ENCODE measurements at regions of chr18 and their contacts with region 1.

Region 1: GRCh38 chr18:8800449-8800848 is 95.1 kb downstream of the MTCL1 start:
- DNase-seq: peak; percentile 100
- ATAC-seq: peak; percentile 75
- H3K4me3 ChIP-seq: peak overlapping the region; percentile 1; the same call in 1 of the 2 replicates
- H3K27ac ChIP-seq: peak overlapping the region; percentile 95
- H3K4me1 ChIP-seq: peaks cover 43% of the 10 kb centered on the region
- H3K27me3 ChIP-seq: no peaks in the 10 kb centered on the region
- CTCF ChIP-seq: no peak
- POLR2A ChIP-seq: peak; percentile 68
- RAD21 ChIP-seq: peak; percentile 21; the same call in 1 of the 2 replicates

Region 2: DNA sequence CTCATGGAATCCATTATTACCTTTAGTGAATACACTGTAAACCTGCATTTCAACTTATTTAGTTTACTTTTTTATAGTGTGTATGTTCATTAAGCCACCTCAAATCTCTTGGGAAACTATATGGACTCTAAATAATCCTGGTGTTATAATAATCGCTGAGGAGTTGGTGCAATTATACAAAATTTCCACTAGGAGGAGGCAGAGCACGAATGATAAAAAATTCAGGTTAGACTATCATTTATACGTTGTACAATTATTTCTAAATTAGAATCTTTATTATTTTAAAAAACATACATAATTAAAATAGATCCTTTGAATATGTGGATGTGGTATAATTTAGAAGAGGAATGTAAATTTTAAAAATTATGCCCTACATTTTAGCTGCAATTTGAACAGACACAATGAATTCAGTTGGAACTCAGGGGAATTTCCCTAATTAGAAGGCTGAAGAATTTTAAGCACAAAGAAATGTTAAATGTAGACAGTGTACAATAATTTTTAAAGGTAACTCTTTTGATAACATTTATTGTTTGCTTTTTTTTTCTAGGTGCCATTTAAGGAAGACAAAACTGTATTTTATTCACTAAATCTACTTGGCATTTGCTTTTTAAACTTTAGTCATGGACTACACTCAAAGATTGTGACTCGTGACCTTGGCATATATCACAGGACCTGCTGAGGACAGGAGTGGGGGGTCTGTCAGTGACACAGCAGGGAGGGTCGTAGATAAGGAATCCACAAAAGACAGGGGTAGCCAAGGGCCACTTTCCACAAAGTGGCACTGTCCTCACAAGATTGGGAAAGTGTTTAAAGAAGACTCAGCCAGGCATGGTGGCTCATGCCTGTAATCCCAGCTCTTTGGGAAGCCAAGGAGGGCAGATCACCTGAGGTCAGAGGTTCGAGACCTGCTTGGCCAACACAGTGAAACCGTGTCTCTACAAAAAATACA is 145.7 kb before region 1 on chr18:
- CTCF ChIA-PET with region 1: no interaction called
- POLR2A ChIA-PET with region 1: no interaction called
- dilution Hi-C with region 1: no loop called
- in situ Hi-C with region 1: no loop called
- intact Hi-C with region 1: loop called (anchors 10 kb)
- DNase-seq: peak; percentile 34
- ATAC-seq: peak; percentile 82
- H3K4me3 ChIP-seq: no peak overlapping the region
- H3K27ac ChIP-seq: no peak overlapping the region
- H3K4me1 ChIP-seq: peaks cover 2% of the 10 kb centered on the region
- H3K27me3 ChIP-seq: no peaks in the 10 kb centered on the region; the same call in 1 of the 2 replicates
- CTCF ChIP-seq: peak; percentile 88
- POLR2A ChIP-seq: no peak
- RAD21 ChIP-seq: peak; percentile 77

Region 3: GRCh38 chr18:8747440-8747937 is 53.0 kb before region 1 on chr18:
- CTCF ChIA-PET with region 1: no interaction called
- POLR2A ChIA-PET with region 1: interaction called, 7 read pairs
- dilution Hi-C with region 1: no loop called
- in situ Hi-C with region 1: no loop called
- intact Hi-C with region 1: loop called (anchors 2 kb)
- DNase-seq: peak; percentile 96
- ATAC-seq: peak; percentile 76
- H3K4me3 ChIP-seq: no peak overlapping the region
- H3K27ac ChIP-seq: peak overlapping the region; percentile 96
- H3K4me1 ChIP-seq: peaks cover 56% of the 10 kb centered on the region
- H3K27me3 ChIP-seq: no peaks in the 10 kb centered on the region
- CTCF ChIP-seq: no peak
- POLR2A ChIP-seq: peak; percentile 67
- RAD21 ChIP-seq: no peak

Region 4: DNA sequence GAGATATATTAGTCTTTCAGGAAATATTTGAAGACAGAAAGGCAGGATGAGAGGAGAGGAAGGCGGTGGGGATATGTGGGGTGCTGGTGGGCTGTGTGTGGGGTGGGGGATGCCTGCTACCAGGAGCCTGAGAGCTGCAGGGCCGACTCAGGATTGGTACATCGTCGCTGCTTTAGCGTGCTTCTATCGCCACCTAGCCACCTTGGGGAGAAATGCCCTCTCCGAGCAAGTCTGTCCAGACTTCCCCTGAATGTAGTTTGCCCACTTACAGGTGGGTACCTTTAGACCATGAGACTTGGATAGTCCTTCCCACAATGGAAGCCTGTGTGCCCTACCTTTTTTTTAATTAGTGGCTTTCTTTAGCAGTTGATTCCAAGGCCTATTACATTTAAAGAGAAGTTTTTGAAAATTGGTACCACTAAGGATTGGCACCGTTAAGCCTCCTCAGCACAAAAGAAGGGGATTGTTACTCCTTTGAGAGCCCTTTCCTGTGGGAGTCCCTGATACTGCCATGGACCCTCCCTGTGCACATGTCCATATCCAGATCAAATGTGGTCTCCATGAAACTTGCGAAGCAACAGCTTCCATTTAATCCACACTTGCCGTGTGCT is 187.9 kb after region 1 on chr18:
- CTCF ChIA-PET with region 1: interaction called, 4 read pairs
- POLR2A ChIA-PET with region 1: no interaction called
- dilution Hi-C with region 1: no loop called
- in situ Hi-C with region 1: no loop called
- intact Hi-C with region 1: loop called (anchors 1 kb)
- DNase-seq: peak; percentile 69
- ATAC-seq: peak; percentile 86
- H3K4me3 ChIP-seq: no peak overlapping the region
- H3K27ac ChIP-seq: no peak overlapping the region
- H3K4me1 ChIP-seq: peaks cover 14% of the 10 kb centered on the region
- H3K27me3 ChIP-seq: no peaks in the 10 kb centered on the region
- CTCF ChIP-seq: peak; percentile 89
- POLR2A ChIP-seq: peak; percentile 42; the same call in 1 of the 2 replicates
- RAD21 ChIP-seq: peak; percentile 98

Region 5: GRCh38 chr18:9136315-9137155 is 336.1 kb after region 1 on chr18 and contains the start of gene ANKRD12:
- CTCF ChIA-PET with region 1: no interaction called
- POLR2A ChIA-PET with region 1: no interaction called
- dilution Hi-C with region 1: no loop called
- in situ Hi-C with region 1: no loop called
- intact Hi-C with region 1: loop called (anchors 2 kb)
- DNase-seq: peak; percentile 96
- ATAC-seq: peak; percentile 88
- H3K4me3 ChIP-seq: peak within 1 kb of the TSS; percentile 95
- H3K27ac ChIP-seq: peak within 1 kb of the TSS; percentile 97
- H3K4me1 ChIP-seq: peaks cover 8% of the 10 kb centered on the region
- H3K27me3 ChIP-seq: no peaks in the 10 kb centered on the region
- CTCF ChIP-seq: no peak
- POLR2A ChIP-seq: peak; percentile 93
- RAD21 ChIP-seq: peak; percentile 10; the same call in 1 of the 2 replicates
- total RNA-seq, gene ANKRD12: 12.9 and 31.7 TPM in 2 replicates

Measured in IMR-90 (cell line).